Activated T-helper 1 cell treated with anti-CD3 and anti-CD28 coated beads, Interleukin-12 subunit alpha, Interleukin-12 subunit beta, Interleukin-2, Interleukin-4 antibody, amounts not matched to agents 30 ng/mL and 10 ng/mL and 1 ng/mL, durations not matched to agents 14 hours and 24 hours and 36 hours (primary cell): ENCODE measurements at regions of chr1 and their contacts with region 1.

Region 1: GRCh38 chr1:20058531-20058930 is 11.5 kb upstream of the PLA2G5 start:
- DNase-seq: peak; percentile 25
- H3K4me3 Mint-ChIP-seq: peak overlapping the region; percentile 2
- H3K27ac Mint-ChIP-seq: peak overlapping the region; percentile 13
- H3K4me1 Mint-ChIP-seq: peaks cover 24% of the 10 kb centered on the region
- H3K27me3 Mint-ChIP-seq: peaks cover 17% of the 10 kb centered on the region

Region 2: GRCh38 chr1:19974822-19975416 is 83.6 kb before region 1 on chr1:
- intact Hi-C with region 1: loop called (anchors 5 kb)
- DNase-seq: no peak
- H3K4me3 Mint-ChIP-seq: no peak overlapping the region
- H3K27ac Mint-ChIP-seq: no peak overlapping the region
- H3K4me1 Mint-ChIP-seq: no peaks in the 10 kb centered on the region
- H3K27me3 Mint-ChIP-seq: peaks cover 14% of the 10 kb centered on the region

Region 3: DNA sequence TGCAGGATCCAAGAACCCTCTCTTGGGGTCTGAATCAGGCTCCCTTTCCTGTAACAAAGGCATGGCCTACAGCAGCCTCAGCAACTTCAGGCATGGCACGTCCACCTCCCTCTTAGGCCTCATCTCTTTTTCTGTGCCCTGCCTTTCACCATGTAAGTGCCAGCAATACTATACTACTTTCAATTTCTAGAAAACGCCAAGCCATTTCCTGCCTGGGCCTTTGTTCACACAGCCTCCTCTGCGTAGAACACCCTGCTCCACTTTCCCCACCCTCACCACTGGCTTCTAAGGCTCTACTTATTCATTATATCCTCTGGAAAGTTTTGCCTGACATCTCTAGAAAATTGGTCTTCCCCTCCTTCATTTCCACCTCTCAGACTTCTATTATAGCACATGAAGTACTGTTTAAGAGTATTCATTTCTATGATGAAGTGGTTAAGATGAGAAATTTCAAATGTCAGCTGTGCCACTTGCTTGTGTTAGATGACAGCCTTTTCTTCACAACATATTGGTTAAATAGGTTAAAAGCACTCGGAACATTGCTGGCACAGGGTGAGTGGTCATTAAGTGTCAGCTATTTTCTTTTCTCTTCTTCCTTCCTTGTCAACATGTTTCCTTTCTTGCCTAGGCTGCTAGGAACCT is 190.6 kb after region 1 on chr1:
- intact Hi-C with region 1: loop called (anchors 1 kb)
- DNase-seq: peak; percentile 12
- H3K4me3 Mint-ChIP-seq: peak overlapping the region; percentile 6
- H3K27ac Mint-ChIP-seq: peak overlapping the region; percentile 83
- H3K4me1 Mint-ChIP-seq: peaks cover 17% of the 10 kb centered on the region
- H3K27me3 Mint-ChIP-seq: peaks cover 6% of the 10 kb centered on the region